ENCODE measurements at regions of chr2 and their contacts with region 1.

Region 1: GRCh38 chr2:71226965-71227560 is at the start of gene PAIP2B:
- DNase-seq: peak; percentile 99 to 100 (median 99)
- ATAC-seq: peak; percentile 98
- H3K4me3 ChIP-seq: peak within 1 kb of the TSS; percentile 89
- H3K27ac ChIP-seq: peak within 1 kb of the TSS; percentile 89
- H3K4me1 ChIP-seq: no peaks in the 10 kb centered on the region
- H3K27me3 ChIP-seq: no peaks in the 10 kb centered on the region
- total RNA-seq, gene PAIP2B: 21.5 to 34.5 (median 30.9) TPM

Region 2: GRCh38 chr2:71276311-71277146 is 49.5 kb after region 1 on chr2:
- intact Hi-C with region 1: loop called in 1 of 4 experiments (anchors 10 kb)
- DNase-seq: peak; percentile 92 to 97 (median 96)
- ATAC-seq: peak; percentile 99 to 100
- H3K4me3 ChIP-seq: peak overlapping the region; percentile 26
- H3K27ac ChIP-seq: peak overlapping the region; percentile 15
- H3K4me1 ChIP-seq: no peaks in the 10 kb centered on the region
- H3K27me3 ChIP-seq: no peaks in the 10 kb centered on the region

Region 3: GRCh38 chr2:71331581-71332434 is 104.7 kb after region 1 on chr2 and contains the start of gene ZNF638:
- intact Hi-C with region 1: loop called in 1 of 4 experiments (anchors 5 kb)
- DNase-seq: peak; percentile 96 to 98 (median 98)
- ATAC-seq: peak; percentile 99
- H3K4me3 ChIP-seq: peak within 1 kb of the TSS; percentile 80
- H3K27ac ChIP-seq: peak within 1 kb of the TSS; percentile 93
- H3K4me1 ChIP-seq: no peaks in the 10 kb centered on the region
- H3K27me3 ChIP-seq: no peaks in the 10 kb centered on the region
- total RNA-seq, gene ZNF638: 72.3 to 84.2 (median 78.9) TPM

Region 4: DNA sequence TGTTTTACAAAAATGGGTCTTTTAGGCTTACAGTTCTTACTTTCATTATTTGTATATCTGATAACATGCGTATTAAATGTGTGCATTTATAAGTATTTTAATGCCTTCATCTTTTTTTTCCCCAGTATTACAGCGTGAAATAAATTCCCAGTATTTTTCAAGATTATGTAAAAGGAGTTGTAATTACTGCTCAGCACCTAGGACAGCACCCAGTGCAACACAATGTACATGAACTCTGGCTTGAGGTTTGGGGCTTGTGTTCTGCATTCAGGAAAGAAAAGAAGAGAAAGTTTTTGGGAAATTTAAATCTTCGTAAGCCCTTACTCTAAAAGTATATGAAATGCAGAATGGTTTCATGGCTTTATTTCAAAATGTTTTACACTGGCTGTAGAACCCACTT is 121.2 kb after region 1 on chr2:
- intact Hi-C with region 1: no loop called
- DNase-seq: no peak
- ATAC-seq: peak in 1 of 2 donors; percentile 47
- H3K4me3 ChIP-seq: no peak overlapping the region
- H3K27ac ChIP-seq: no peak overlapping the region
- H3K4me1 ChIP-seq: peaks cover under 1% of the 10 kb centered on the region
- H3K27me3 ChIP-seq: no peaks in the 10 kb centered on the region

Measured in right cardiac atrium (tissue), 5 donors.